ENCODE measurements at regions of chrX and their contacts with region 1.

Region 1: DNA sequence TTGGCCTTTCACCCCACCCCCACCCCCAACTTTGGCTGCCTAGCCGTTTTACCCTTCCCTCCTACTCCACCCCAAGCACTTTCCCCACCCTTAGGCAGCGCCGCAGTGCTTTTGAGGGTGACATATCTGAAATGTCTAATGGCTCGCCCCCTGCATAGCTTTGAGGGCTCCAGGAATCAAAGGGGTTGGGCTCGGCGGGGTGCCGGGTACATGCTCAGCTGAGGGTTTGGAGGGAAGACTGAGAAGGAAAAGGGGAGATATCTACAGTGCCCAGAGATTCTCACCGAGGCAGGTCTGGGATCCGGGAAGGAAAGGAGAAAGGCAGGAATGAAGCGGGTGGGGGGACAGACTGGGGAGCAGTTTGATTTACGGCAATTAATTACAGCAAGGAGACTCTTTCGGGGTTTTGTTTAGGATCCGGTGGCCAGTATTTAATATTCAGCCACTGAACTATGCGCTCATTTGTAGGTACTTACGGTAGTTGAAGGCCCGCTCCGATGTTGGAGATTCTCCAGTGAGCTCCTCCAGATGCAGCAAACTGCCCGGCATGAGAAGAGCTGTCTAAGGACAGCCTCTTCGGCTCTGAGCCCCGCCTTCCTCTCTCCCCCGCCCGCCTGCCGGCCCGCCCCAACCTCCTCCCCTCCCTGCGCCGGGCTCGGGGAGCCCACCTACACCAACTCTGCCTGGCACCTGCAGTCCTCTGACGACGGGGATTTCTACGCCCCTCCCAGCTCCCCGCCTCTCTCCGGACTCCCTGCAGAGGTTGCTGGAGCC is at the start of gene IGSF1:
- DNase-seq: peak; percentile 66 to 67
- H3K4me3 ChIP-seq: peak within 1 kb of the TSS; percentile 62 to 83 (median 64)
- H3K27ac ChIP-seq: no peak within 1 kb of the TSS
- H3K4me1 ChIP-seq: peaks cover 0 to 4% (median 3%) of the 10 kb centered on the region in 4 experiments; a peak in 6 of 7 replicates
- H3K27me3 ChIP-seq: no peaks in the 10 kb centered on the region
- CTCF ChIP-seq: no peak
- EP300 ChIP-seq: no peak
- POLR2A ChIP-seq: peak in 1 of 2 experiments; percentile 30; a peak in 1 of 3 replicates
- RAD21 ChIP-seq: no peak; a peak in 1 of 4 replicates
- total RNA-seq, gene IGSF1: 23.0 and 23.1 TPM in 2 replicates

Region 2: GRCh38 chrX:131058136-131058868 is 230.6 kb before region 1 on chrX and contains the start of gene ARHGAP36:
- CTCF ChIA-PET with region 1: no interaction called
- POLR2A ChIA-PET with region 1: no interaction called
- DNase-seq: no peak
- H3K4me3 ChIP-seq: peak within 1 kb of the TSS; percentile 11 to 59 (median 30)
- H3K27ac ChIP-seq: no peak within 1 kb of the TSS
- H3K4me1 ChIP-seq: peaks cover 0 to 6% (median 1%) of the 10 kb centered on the region in 4 experiments; a peak in 4 of 7 replicates
- H3K27me3 ChIP-seq: peaks cover 9 to 31% (median 28%) of the 10 kb centered on the region in 4 experiments
- CTCF ChIP-seq: no peak
- EP300 ChIP-seq: no peak
- POLR2A ChIP-seq: no peak
- RAD21 ChIP-seq: no peak
- total RNA-seq, gene ARHGAP36: 0.32 and 0.63 TPM in 2 replicates

Region 3: GRCh38 chrX:131277547-131278136 is 11.3 kb before region 1 on chrX:
- CTCF ChIA-PET with region 1: no interaction called
- POLR2A ChIA-PET with region 1: interaction called, 16 read pairs
- DNase-seq: no peak
- H3K4me3 ChIP-seq: no peak overlapping the region
- H3K27ac ChIP-seq: no peak overlapping the region
- H3K4me1 ChIP-seq: peaks cover 0 to 20% (median 2%) of the 10 kb centered on the region in 4 experiments; a peak in 4 of 7 replicates
- H3K27me3 ChIP-seq: no peaks in the 10 kb centered on the region
- CTCF ChIP-seq: no peak
- EP300 ChIP-seq: no peak
- POLR2A ChIP-seq: no peak
- RAD21 ChIP-seq: no peak

Region 4: GRCh38 chrX:131322651-131323050 is 33.7 kb after region 1 on chrX:
- CTCF ChIA-PET with region 1: no interaction called
- POLR2A ChIA-PET with region 1: no interaction called
- DNase-seq: no peak
- H3K4me3 ChIP-seq: no peak overlapping the region
- H3K27ac ChIP-seq: no peak overlapping the region
- H3K4me1 ChIP-seq: no peaks in the 10 kb centered on the region
- H3K27me3 ChIP-seq: no peaks in the 10 kb centered on the region
- CTCF ChIP-seq: no peak
- EP300 ChIP-seq: no peak
- POLR2A ChIP-seq: no peak
- RAD21 ChIP-seq: no peak

Measured in H1 (cell line).